ENCODE measurements at regions of chr7 and their contacts with region 1.

Region 1: DNA sequence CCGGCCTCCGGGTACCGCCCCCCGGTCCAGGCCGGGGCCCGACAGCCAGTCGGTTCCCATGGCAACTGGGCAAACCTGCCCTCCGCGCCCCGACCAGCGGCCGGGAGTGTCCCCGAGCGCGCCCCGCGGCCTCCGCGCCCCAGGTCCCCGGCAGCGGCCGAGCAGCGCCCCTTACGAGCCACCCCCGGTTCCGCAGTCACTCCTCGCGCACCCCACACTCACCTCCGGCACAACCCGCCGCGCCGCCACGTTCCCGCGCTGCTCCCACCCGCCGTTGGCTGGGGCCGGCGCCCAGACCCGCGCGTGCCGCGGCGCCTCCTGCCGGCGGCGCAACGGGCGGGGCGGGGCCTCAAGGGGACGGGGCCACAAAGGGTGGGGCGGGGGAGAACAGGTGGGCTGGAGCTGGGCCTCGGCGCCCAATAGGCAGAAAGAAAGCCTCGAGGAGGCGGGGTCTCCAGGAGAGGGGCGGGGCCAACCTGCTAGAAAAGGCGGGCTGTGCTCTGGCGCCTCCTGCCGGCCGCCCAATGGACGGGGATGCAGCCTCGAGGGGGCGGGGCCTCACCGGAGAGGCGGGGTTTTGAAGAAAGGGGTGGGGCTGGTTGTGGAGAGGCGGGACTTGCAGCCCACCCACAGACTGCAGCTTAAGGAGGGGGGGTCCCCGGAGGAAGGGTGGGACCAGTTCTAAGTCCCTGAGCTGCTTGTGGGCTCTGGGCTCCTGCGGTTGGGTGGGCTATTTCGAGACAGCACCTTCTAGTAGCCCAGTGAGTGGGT is at the start of gene RADIL:
- H3K4me3 Mint-ChIP-seq: peak within 1 kb of the TSS; percentile 41
- H3K27ac Mint-ChIP-seq: no peak within 1 kb of the TSS
- H3K4me1 Mint-ChIP-seq: peaks cover 12% of the 10 kb centered on the region
- H3K27me3 Mint-ChIP-seq: peaks cover 53% of the 10 kb centered on the region

Region 2: DNA sequence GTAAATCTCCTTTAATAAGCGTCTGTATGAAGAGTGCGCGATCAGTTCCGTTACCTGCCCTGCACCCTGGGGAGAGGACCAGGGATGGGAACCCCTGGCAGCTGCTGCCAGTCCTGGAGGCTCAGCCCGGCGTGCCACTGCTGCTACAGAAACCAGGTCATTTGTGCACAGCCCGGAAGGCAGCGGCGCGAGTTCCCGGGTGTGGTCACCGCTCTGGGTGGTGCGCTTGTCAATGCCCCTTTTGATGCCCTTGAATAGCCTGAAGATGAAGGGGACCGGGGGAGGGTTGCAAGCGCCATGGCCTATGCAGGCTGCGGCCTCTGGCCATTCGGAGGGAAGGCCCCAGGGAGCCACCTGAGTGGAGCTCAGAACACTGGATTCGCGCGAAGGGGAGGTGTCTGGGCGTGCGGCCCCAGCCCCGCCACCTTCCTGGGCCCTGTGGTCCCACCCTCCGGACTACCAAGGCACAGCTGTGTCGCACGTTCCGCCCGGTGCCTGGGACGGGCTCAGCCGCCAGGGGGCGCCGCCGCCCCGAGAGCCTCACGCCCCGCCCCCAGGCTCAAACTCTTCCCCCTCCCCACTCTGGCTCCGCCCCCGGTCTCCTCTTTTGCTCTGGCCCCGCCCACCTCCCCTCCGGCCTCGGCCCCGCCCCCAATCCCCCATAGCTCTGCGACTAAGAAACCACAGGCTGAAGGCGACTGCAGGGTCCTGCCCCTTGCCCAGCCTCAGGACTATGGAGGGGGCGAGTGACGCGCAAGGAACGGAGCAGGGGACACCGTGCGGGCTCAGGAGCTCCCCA is 91.6 kb before region 1 on chr7:
- intact Hi-C with region 1: loop called (anchors 5 kb)
- H3K4me3 Mint-ChIP-seq: peak overlapping the region; percentile 30
- H3K27ac Mint-ChIP-seq: no peak overlapping the region
- H3K4me1 Mint-ChIP-seq: peaks cover 8% of the 10 kb centered on the region
- H3K27me3 Mint-ChIP-seq: no peaks in the 10 kb centered on the region

Region 3: GRCh38 chr7:4830176-4830575 is 53.4 kb before region 1 on chr7:
- intact Hi-C with region 1: loop called (anchors 2 kb)
- H3K4me3 Mint-ChIP-seq: no peak overlapping the region
- H3K27ac Mint-ChIP-seq: no peak overlapping the region
- H3K4me1 Mint-ChIP-seq: no peaks in the 10 kb centered on the region
- H3K27me3 Mint-ChIP-seq: peaks cover 2% of the 10 kb centered on the region

Region 4: GRCh38 chr7:5132539-5132938 is 249.0 kb after region 1 on chr7:
- intact Hi-C with region 1: no loop called
- H3K4me3 Mint-ChIP-seq: no peak overlapping the region
- H3K27ac Mint-ChIP-seq: no peak overlapping the region
- H3K4me1 Mint-ChIP-seq: no peaks in the 10 kb centered on the region
- H3K27me3 Mint-ChIP-seq: peaks cover 7% of the 10 kb centered on the region

Region 5: DNA sequence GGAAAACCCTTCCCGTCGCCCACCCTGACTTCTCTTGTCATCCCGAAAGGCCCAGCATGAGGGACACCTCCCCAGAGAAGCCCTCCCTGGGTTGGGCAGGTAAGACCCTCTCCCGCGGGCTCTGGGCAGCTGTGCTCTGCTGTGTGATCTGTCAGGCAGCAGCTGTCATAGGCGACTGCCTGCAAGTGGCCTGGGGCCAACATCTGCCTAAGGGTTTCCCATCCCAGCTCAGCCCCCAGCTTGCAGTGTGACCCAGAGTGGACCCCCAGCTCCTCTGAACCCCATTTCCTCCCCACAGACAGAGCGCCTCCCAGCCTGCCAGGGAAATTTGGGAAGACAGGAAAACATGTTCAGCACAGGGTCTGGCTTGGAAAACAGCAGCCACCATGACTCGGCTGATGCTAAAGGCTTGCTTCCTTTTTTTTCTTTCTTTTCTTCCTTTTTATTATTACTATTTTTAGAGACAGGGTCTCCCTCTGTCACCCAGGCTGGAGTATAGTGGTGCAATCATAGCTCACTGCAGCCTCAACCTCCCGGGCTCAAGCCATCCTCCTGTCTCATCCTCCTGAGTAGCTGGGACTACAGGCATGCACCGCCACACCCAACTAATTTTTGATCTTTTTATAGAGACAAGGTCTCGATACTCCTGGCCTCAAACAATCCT is 558.4 kb after region 1 on chr7:
- intact Hi-C with region 1: no loop called
- H3K4me3 Mint-ChIP-seq: no peak overlapping the region
- H3K27ac Mint-ChIP-seq: peak overlapping the region; percentile 44
- H3K4me1 Mint-ChIP-seq: peaks cover 30% of the 10 kb centered on the region
- H3K27me3 Mint-ChIP-seq: peaks cover 5% of the 10 kb centered on the region